CD4-positive, alpha-beta T cell (primary cell): ENCODE measurements at regions of chr9 and their contacts with region 1.

Region 1: DNA sequence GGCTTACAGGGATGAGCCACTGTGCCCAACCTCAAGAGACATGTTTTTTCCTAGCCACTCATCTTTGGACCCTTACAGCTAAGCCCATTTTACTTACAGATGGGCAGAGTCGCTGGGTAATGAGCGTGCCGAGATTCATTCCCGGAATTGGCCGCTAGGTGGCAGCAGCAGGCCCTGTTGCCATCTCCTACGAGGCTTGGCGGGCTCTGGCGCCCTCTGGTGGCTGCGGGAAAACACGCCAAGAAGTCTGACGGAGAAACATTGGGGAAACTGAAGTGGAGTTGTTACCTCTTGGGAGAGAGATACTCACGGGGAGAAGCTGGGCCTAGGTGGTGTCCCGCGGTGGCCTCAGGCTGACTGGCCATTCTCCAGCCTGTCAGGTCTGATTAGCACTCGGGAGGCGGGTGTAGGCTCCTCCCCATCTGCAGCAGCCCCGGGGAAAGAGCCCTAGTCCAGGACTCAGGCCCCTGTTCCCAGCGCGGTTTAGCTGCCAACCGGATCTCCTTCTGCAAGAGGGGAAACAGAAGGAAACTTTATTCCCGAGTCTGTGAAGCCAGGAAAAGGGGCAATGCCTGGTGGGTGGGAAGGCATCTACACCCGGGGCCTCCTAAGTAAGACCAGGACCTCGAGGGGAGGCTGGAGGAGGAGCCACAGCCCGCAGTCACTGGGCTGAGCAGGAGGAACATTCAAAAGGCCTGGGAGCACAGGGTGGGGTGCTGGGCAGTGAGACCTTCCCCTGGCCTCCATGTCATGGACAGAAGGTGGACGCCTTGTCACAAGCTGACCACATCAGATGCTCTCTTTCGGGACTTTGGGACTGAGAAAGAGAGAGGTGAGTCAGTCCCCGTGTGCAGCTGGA is 9.7 kb downstream of the PTGES2 start:
- DNase-seq: peak; percentile 92 to 99 (median 98)
- ATAC-seq: peak; percentile 96
- H3K4me3 ChIP-seq: no peak overlapping the region
- H3K4me3 Mint-ChIP-seq: peak overlapping the region; percentile 44
- H3K27ac ChIP-seq: no peak overlapping the region
- H3K27ac Mint-ChIP-seq: peak overlapping the region; percentile 16
- H3K4me1 ChIP-seq: peaks cover 15% of the 10 kb centered on the region
- H3K4me1 Mint-ChIP-seq: peaks cover 6% of the 10 kb centered on the region
- H3K27me3 ChIP-seq: no peaks in the 10 kb centered on the region
- H3K27me3 Mint-ChIP-seq: no peaks in the 10 kb centered on the region
- CTCF ChIP-seq: peak; percentile 100

Region 2: DNA sequence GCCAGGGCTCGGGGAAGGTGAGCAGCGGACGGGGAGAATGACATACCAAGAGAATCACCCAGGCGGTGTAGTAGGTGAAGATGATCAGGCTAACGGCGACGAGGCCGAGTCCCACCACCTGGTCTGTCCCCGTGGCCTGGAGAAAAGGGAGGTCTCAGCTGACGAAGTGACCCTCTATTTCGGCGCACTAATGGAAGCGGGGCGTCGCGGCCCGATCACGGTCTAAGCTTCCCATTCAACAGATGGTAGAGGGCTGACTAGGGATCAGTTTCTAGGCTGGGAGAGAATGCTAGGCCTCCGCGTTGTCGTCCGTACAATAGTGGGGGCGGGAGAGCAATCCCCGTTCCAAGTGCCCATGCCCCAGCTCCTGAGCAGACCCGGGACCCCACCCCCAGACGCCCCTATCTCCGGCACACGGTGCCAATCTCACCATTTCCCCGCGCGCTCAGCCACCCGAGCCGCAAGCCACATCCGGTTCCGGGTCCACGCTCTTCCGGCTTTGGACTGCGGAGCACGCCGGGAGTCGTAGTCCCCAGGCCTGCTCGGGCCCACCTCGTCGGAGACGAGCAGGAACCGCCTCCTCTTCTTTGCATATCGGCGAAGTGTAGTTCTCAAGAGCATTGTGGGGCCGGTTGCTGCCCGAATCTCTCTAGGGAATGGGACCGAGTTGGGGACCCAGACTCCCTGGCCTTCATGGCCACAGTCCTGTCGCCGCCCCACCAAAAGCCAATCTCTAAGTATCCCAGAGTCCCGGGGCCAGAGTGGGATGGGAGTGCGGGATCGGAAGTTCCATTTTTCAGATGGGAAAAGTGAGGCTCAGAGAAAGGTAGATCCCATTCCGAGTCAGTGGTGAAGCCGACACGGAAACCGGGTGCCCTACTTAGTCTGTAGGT is 180.2 kb before region 1 on chr9 and contains the start of gene DPM2:
- CTCF ChIA-PET with region 1: no interaction called
- POLR2A ChIA-PET with region 1: no interaction called
- intact Hi-C with region 1: loop called in 1 of 2 experiments (anchors 5 kb)
- DNase-seq: peak; percentile 74 to 94 (median 84)
- ATAC-seq: peak; percentile 85
- H3K4me3 ChIP-seq: peak within 1 kb of the TSS; percentile 90
- H3K4me3 Mint-ChIP-seq: peak within 1 kb of the TSS; percentile 93
- H3K27ac ChIP-seq: peak within 1 kb of the TSS; percentile 48 to 80
- H3K27ac Mint-ChIP-seq: peak within 1 kb of the TSS; percentile 88
- H3K4me1 ChIP-seq: peaks cover 47% of the 10 kb centered on the region
- H3K4me1 Mint-ChIP-seq: peaks cover 63% of the 10 kb centered on the region
- H3K27me3 ChIP-seq: no peaks in the 10 kb centered on the region
- H3K27me3 Mint-ChIP-seq: no peaks in the 10 kb centered on the region
- CTCF ChIP-seq: no peak
- total RNA-seq, gene DPM2: 41.7 to 47.6 TPM

Region 3: GRCh38 chr9:128034821-128035764 is 82.7 kb before region 1 on chr9:
- CTCF ChIA-PET with region 1: interaction called, 6 read pairs
- POLR2A ChIA-PET with region 1: no interaction called
- intact Hi-C with region 1: loop called in 1 of 2 experiments (anchors 5 kb)
- DNase-seq: peak; percentile 45 to 90 (median 58)
- ATAC-seq: peak; percentile 42
- H3K4me3 ChIP-seq: no peak overlapping the region
- H3K4me3 Mint-ChIP-seq: peak overlapping the region; percentile 70
- H3K27ac ChIP-seq: peak overlapping the region in 1 of 2 donors; percentile 61
- H3K27ac Mint-ChIP-seq: peak overlapping the region; percentile 78
- H3K4me1 ChIP-seq: peaks cover 54% of the 10 kb centered on the region
- H3K4me1 Mint-ChIP-seq: peaks cover 42% of the 10 kb centered on the region
- H3K27me3 ChIP-seq: no peaks in the 10 kb centered on the region
- H3K27me3 Mint-ChIP-seq: no peaks in the 10 kb centered on the region
- CTCF ChIP-seq: peak; percentile 90

Region 4: GRCh38 chr9:128055344-128056040 is 62.4 kb before region 1 on chr9:
- CTCF ChIA-PET with region 1: interaction called, 5 read pairs
- POLR2A ChIA-PET with region 1: no interaction called
- intact Hi-C with region 1: loop called in 1 of 2 experiments (anchors 2 kb)
- DNase-seq: no peak
- ATAC-seq: no peak
- H3K4me3 ChIP-seq: no peak overlapping the region
- H3K4me3 Mint-ChIP-seq: no peak overlapping the region
- H3K27ac ChIP-seq: no peak overlapping the region
- H3K27ac Mint-ChIP-seq: no peak overlapping the region
- H3K4me1 ChIP-seq: peaks cover 5% of the 10 kb centered on the region
- H3K4me1 Mint-ChIP-seq: no peaks in the 10 kb centered on the region
- H3K27me3 ChIP-seq: no peaks in the 10 kb centered on the region
- H3K27me3 Mint-ChIP-seq: no peaks in the 10 kb centered on the region
- CTCF ChIP-seq: no peak

Region 5: GRCh38 chr9:128094166-128094967 is 23.5 kb before region 1 on chr9:
- CTCF ChIA-PET with region 1: interaction called, 12 read pairs
- POLR2A ChIA-PET with region 1: no interaction called
- intact Hi-C with region 1: no loop called
- DNase-seq: peak; percentile 33 to 87 (median 62)
- ATAC-seq: peak; percentile 78
- H3K4me3 ChIP-seq: no peak overlapping the region
- H3K4me3 Mint-ChIP-seq: peak overlapping the region; percentile 78
- H3K27ac ChIP-seq: peak overlapping the region; percentile 62 to 81
- H3K27ac Mint-ChIP-seq: peak overlapping the region; percentile 90
- H3K4me1 ChIP-seq: peaks cover 82% of the 10 kb centered on the region
- H3K4me1 Mint-ChIP-seq: peaks cover 79% of the 10 kb centered on the region
- H3K27me3 ChIP-seq: no peaks in the 10 kb centered on the region
- H3K27me3 Mint-ChIP-seq: no peaks in the 10 kb centered on the region
- CTCF ChIP-seq: no peak

Region 6: GRCh38 chr9:128103589-128103962 is 14.3 kb before region 1 on chr9:
- CTCF ChIA-PET with region 1: interaction called, 17 read pairs
- POLR2A ChIA-PET with region 1: no interaction called
- intact Hi-C with region 1: no loop called
- DNase-seq: peak in 12 of 14 experiments; percentile 21 to 69 (median 44)
- ATAC-seq: peak; percentile 78
- H3K4me3 ChIP-seq: no peak overlapping the region
- H3K4me3 Mint-ChIP-seq: no peak overlapping the region
- H3K27ac ChIP-seq: peak overlapping the region in 1 of 2 donors; percentile 23
- H3K27ac Mint-ChIP-seq: peak overlapping the region; percentile 74
- H3K4me1 ChIP-seq: peaks cover 56% of the 10 kb centered on the region
- H3K4me1 Mint-ChIP-seq: peaks cover 44% of the 10 kb centered on the region
- H3K27me3 ChIP-seq: no peaks in the 10 kb centered on the region
- H3K27me3 Mint-ChIP-seq: no peaks in the 10 kb centered on the region
- CTCF ChIP-seq: peak; percentile 56

Region 7: DNA sequence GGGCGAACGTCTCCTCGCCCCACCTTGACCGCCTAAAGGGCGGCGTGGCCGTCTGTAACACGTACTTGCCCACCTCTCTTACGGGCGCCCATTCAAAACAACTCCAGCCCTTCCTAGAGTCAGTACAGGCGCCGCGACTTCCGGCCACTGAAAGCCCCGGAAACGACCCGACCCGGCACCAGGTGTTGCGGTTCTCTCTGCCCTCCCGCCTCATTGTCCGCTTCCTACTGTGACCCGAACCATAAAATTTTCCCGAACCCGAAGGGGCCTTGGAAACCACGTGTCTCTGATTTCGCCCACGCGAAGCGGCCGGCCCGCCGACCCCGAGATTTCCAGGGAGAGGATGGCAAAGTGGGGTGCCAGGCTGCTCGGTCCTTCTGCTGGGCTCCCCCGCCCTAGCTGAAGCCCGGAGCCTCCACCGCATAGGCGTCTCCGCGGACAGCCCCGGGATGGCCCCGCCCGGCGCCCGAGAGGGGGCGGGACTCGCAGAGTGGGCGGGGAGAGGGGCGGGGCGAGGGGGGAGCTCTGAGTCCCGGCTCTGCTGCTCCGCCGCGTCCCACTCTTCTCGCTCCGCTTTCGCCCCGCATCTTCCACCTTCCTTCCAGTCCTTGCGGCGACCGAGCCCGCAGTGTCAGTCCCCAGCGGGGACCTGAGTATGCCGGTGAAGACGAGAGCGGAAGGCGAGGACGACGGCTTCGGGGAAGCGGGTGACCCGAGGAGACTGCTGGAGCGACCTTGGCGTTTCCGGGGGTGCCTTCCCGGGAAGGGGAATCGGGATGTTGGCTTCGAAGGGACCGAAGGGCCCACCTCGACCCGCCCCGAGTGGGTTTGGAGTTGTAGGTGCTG is 10.4 kb after region 1 on chr9:
- CTCF ChIA-PET with region 1: interaction called, 10 read pairs
- POLR2A ChIA-PET with region 1: interaction called, 7 read pairs
- intact Hi-C with region 1: loop called in 1 of 2 experiments (anchors 1 kb)
- DNase-seq: peak; percentile 69 to 94 (median 84)
- ATAC-seq: peak; percentile 79
- H3K4me3 ChIP-seq: peak overlapping the region; percentile 99
- H3K4me3 Mint-ChIP-seq: peak overlapping the region; percentile 100
- H3K27ac ChIP-seq: peak overlapping the region; percentile 94 to 97
- H3K27ac Mint-ChIP-seq: peak overlapping the region; percentile 100
- H3K4me1 ChIP-seq: peaks cover 44% of the 10 kb centered on the region
- H3K4me1 Mint-ChIP-seq: peaks cover 42% of the 10 kb centered on the region
- H3K27me3 ChIP-seq: no peaks in the 10 kb centered on the region
- H3K27me3 Mint-ChIP-seq: peaks cover 3% of the 10 kb centered on the region
- CTCF ChIP-seq: no peak

Region 8: GRCh38 chr9:128254855-128255759 is 137.3 kb after region 1 on chr9:
- CTCF ChIA-PET with region 1: no interaction called
- POLR2A ChIA-PET with region 1: no interaction called
- intact Hi-C with region 1: no loop called
- DNase-seq: peak; percentile 35 to 74 (median 48)
- ATAC-seq: no peak
- H3K4me3 ChIP-seq: no peak overlapping the region
- H3K4me3 Mint-ChIP-seq: peak overlapping the region; percentile 66
- H3K27ac ChIP-seq: no peak overlapping the region
- H3K27ac Mint-ChIP-seq: no peak overlapping the region
- H3K4me1 ChIP-seq: peaks cover 14% of the 10 kb centered on the region
- H3K4me1 Mint-ChIP-seq: peaks cover 15% of the 10 kb centered on the region
- H3K27me3 ChIP-seq: no peaks in the 10 kb centered on the region
- H3K27me3 Mint-ChIP-seq: peaks cover 5% of the 10 kb centered on the region
- CTCF ChIP-seq: peak; percentile 74

Region 9: DNA sequence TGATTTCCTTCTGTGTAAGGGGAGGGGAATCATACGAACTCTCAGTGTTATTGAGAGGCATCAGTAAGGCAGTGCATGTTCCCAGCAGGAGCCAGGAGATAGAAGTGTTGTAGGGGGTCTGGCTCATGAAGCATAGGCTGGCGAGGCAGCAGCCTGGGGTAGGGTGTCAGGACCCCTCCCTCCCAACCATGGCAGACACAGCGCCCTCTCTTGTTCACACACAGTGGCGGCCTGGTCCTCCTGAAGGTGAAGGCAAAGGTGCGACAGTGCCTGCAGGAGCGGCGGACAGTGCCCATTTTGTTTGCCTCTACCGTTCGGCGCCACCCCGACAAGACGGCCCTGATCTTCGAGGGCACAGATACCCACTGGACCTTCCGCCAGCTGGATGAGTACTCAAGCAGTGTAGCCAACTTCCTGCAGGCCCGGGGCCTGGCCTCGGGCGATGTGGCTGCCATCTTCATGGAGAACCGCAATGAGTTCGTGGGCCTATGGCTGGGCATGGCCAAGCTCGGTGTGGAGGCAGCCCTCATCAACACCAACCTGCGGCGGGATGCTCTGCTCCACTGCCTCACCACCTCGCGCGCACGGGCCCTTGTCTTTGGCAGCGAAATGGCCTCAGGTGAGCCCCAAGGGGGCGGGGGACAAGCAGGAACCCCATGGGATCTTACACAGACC is 227.2 kb after region 1 on chr9:
- CTCF ChIA-PET with region 1: no interaction called
- POLR2A ChIA-PET with region 1: no interaction called
- intact Hi-C with region 1: no loop called
- DNase-seq: no peak
- ATAC-seq: no peak
- H3K4me3 ChIP-seq: no peak overlapping the region
- H3K4me3 Mint-ChIP-seq: no peak overlapping the region
- H3K27ac ChIP-seq: no peak overlapping the region
- H3K27ac Mint-ChIP-seq: no peak overlapping the region
- H3K4me1 ChIP-seq: peaks cover 15% of the 10 kb centered on the region
- H3K4me1 Mint-ChIP-seq: peaks cover 7% of the 10 kb centered on the region
- H3K27me3 ChIP-seq: no peaks in the 10 kb centered on the region
- H3K27me3 Mint-ChIP-seq: no peaks in the 10 kb centered on the region
- CTCF ChIP-seq: no peak